ENCODE measurements at regions of chr9 and their contacts with region 1.

Region 1: GRCh38 chr9:133184962-133185361 is 21.2 kb upstream of the GBGT1 start:
- H3K4me3 ChIP-seq: no peak overlapping the region
- H3K27ac ChIP-seq: no peak overlapping the region
- H3K4me1 ChIP-seq: no peaks in the 10 kb centered on the region
- CTCF ChIP-seq: peak; percentile 54; the same call in 1 of the 2 replicates

Region 2: GRCh38 chr9:133149126-133150107 is 35.5 kb before region 1 on chr9:
- CTCF ChIA-PET with region 1: interaction called, 10 read pairs
- POLR2A ChIA-PET with region 1: no interaction called
- H3K4me3 ChIP-seq: peak overlapping the region; percentile 64
- H3K27ac ChIP-seq: peak overlapping the region; percentile 89
- H3K4me1 ChIP-seq: 0 out of 2 replicates have a peak, but pooled peaks cover 3% of the 10 kb centered on the region
- CTCF ChIP-seq: peak; percentile 96

Region 3: DNA sequence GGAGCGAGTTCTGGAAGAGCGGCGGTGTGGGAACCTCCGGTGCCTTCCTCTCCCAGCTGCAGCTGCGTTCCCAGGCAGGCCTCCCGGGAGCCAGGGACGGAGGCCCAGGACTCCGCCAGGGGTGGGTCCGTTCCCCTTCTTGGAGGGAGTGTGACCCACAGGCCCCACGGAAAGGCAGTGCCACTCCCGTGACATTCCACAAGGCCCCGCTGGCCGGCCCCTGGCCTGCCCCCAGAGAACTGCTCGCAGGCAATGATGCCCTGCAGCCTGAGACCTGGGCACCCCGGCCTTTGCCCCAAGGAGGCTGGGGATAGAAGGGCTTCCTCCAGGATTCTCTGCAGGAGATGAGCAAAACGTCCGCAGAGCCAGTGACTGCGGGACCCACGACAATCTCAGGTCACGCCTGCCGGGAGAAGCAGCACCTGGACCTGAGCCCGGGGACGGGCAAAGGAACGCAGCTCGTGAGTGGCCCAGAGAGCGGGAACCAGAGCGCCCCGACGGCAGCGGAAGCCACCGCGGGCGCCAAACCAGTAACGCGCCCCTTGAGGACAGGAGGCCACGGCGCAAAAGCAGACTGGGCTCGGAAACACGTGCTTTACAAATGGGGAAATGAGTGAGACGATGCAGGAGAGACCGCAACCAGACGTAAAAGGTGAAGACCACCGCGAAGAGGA is 14.8 kb after region 1 on chr9:
- CTCF ChIA-PET with region 1: interaction called, 23 read pairs
- POLR2A ChIA-PET with region 1: interaction called, 4 read pairs
- H3K4me3 ChIP-seq: no peak overlapping the region
- H3K27ac ChIP-seq: no peak overlapping the region
- H3K4me1 ChIP-seq: no peaks in the 10 kb centered on the region
- CTCF ChIP-seq: no peak

Region 4: GRCh38 chr9:133238851-133239532 is 54.0 kb after region 1 on chr9:
- CTCF ChIA-PET with region 1: interaction called, 53 read pairs
- POLR2A ChIA-PET with region 1: interaction called, 4 read pairs
- H3K4me3 ChIP-seq: peak overlapping the region; percentile 15; the same call in 1 of the 2 replicates
- H3K27ac ChIP-seq: no peak overlapping the region
- H3K4me1 ChIP-seq: no peaks in the 10 kb centered on the region
- CTCF ChIP-seq: peak; percentile 97

Region 5: DNA sequence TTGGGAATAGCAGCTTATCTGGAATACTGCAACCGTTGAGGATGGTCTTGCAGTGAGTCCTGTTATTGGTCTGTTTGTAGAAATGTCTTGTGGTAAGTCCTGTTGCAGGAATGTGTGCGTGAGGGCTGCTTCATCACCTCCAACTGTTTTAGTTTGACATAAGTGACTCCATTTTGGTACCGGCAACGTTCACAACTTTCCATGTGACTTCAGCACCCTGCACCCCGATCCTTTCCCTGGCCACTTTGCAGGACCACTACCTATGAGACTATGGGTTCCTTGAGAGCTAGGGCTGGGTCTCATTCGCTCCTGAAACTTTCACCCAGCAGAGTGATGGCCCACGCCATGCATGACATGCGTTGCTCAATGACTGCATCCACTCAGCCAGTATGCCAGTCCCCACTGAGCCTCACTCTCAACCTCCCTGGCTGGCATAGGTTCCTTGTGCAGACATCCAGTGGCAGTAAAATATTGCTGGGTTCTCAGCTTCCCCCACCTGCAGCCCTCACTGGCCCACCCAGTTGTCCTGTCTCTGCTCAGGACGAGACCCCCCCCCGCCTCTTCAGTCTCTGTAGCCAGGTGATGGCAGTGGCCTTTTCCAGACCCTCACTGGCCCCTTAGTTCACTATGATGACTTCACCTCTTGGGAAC is 143.0 kb after region 1 on chr9:
- CTCF ChIA-PET with region 1: interaction called, 159 read pairs
- POLR2A ChIA-PET with region 1: interaction called, 19 read pairs
- H3K4me3 ChIP-seq: no peak overlapping the region
- H3K27ac ChIP-seq: no peak overlapping the region
- H3K4me1 ChIP-seq: no peaks in the 10 kb centered on the region
- CTCF ChIP-seq: no peak

Region 6: DNA sequence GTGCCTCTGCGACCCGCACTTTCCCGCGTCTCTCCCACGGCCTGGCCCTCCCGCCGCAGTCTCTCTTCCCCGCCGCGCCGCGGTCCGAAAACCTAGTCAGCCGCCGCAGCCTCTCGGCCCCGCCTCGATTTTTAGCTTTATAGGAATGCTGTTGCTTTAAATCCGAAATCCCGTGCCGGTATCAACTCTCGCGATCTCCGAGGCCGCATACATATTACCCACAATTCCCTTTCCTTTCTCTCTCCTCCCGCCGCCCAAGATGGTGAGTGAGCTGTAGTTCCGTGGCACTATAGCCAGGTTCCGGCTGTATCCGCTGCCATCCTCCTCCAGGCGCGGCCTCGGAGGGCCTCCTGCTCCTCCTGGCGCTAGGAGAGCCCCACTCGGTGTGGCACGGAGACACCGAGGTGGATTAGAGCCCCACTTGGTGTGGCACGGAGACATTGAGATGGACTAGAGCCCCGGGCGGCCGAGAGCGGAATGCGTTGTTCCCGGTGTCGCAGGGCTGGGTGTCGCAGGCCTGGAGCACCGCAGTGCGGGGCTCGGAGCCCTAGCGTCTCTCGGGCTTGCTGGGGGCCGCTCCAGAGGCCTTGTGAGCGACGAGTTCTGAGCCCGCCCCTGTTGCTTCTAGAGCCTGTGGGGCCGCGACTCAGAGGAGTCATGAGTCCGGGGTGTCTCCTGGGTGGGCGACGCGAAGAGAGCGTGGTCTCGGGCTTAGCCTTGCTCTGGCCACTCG is 163.2 kb after region 1 on chr9 and contains the starts of genes MED22 and RPL7A:
- CTCF ChIA-PET with region 1: interaction called, 13 read pairs
- POLR2A ChIA-PET with region 1: interaction called, 9 read pairs
- H3K4me3 ChIP-seq: peak within 1 kb of the TSS; percentile 91
- H3K27ac ChIP-seq: peak within 1 kb of the TSS; percentile 100
- H3K4me1 ChIP-seq: no peaks in the 10 kb centered on the region
- CTCF ChIP-seq: peak; percentile 58; the same call in 1 of the 2 replicates

Region 7: DNA sequence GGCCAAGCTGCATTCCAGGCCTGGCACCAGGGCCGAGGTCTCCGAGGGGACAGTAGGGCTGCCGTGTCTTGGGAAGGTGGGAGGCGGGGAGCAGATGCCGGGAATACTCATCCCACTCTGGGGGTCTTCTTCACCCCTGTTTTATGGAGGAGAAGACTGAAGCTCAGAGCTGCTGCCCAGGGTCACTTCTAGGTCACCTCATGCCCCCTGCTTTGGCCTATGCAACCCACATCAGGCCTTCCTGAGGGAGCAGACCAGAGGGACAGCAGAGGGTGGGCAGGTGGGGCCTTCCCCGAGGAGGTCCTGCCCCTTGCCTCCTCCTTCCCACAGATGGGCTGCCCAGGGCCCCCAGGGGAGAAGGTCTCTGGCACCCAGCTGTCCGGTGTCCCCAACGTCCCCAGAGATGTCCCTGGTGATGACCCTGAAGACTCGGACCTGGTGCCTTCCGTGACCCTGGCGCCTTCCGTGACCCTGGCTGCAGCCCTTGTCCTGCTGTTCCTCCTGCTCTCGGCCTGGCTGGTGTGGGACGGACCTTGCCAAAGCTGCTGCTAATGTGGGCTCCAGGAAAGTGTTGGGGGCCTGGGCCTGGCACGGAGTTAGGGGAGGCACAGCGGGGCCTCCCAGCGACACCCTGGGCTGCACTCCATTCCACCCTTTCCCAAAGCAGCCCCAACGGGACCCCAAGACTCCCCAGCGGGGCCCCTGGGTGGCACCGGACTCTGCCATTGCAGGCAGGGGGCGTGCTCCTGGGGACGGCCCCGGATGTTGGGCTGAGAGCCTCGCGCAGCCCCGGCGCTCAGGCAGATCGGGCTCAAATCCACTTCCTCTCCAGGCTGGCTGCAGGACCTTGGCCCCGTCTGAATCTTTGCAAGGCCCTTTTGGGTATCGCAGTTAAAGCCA is 300.6 kb after region 1 on chr9:
- CTCF ChIA-PET with region 1: interaction called, 69 read pairs
- POLR2A ChIA-PET with region 1: no interaction called
- H3K4me3 ChIP-seq: no peak overlapping the region
- H3K27ac ChIP-seq: no peak overlapping the region
- H3K4me1 ChIP-seq: no peaks in the 10 kb centered on the region
- CTCF ChIP-seq: no peak